Activated CD4-positive, alpha-beta memory T cell treated with anti-CD3 and anti-CD28 coated beads for 36 hours (primary cell): ENCODE measurements at regions of chr1 and their contacts with region 1.

Region 1: DNA sequence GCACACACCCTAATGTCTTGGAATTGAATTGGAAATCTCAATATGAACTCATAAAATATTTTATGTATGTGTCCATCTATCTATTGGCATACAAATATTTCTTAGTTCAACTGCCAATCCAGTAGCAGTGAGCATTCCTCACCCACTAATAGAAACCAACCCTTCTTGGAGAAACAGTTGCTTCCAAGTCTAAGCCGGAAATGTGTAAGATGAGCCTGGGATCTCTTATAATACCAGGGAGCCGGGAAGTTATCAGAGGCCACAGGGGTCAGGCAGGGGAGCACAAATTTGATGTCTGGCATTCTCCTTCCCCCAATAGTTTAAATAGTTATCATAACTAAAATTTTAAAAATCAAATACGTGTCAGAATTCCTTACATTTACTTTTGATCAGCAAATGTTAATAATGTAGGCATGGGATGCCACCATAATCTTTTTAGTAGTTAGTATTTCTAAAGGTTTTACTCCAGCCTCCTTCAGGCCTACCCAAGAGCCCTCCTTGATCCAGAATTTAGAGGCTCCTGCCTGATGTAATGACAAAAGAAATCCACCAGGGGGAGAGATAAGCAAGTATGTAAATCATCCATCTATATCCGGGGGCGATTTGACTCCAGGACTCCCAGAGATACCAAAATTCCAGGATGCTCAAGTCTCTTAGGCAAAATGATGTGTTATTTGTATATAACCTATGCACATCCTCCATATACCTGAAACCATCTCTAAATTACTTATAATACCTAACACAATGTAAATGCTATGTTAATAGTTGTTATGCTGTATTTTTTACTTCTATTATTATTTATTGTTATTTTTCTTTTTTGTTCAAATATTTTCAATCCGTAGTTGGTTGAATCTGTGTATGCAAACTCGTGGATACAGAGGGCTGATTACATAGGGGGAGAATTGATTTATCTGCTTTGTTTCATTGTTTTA is 218.7 kb upstream of the COA6 start:
- DNase-seq: no peak
- H3K4me3 Mint-ChIP-seq: no peak overlapping the region
- H3K27ac Mint-ChIP-seq: no peak overlapping the region
- H3K4me1 Mint-ChIP-seq: peaks cover 7% of the 10 kb centered on the region
- H3K27me3 Mint-ChIP-seq: peaks cover 11% of the 10 kb centered on the region

Region 2: DNA sequence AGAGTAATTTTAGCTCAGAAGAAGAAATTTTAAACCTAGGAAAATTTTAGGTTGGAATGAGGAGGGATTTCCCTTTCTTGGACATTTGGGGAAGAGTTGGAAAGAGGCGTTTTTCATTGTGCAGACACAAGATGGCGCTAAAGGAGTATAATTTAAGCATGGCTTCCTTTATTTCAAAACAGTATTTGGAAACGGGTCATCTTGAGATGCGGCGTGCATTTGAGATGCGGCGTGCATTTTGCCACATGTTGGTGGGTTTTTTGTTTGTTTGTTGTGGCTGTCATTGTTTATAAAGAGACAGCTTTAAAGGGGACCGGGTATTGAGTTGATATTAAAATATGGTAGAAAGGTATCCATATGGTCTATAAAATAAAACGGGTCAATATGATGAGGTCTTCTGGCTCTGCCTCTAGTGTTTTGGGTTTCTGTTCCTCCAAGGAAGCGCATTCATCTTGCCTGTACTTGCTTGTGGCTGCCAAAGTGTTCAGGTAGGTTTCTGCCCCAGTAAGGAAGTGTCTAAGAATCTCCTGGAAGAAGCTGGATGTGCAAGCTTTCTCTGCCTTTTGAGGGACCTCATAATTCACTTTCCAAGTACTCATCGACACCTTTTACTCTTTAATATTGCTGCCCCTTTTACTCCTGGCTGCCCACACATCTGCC is 39.8 kb before region 1 on chr1:
- CTCF ChIA-PET with region 1: no interaction called
- POLR2A ChIA-PET with region 1: no interaction called
- intact Hi-C with region 1: loop called (anchors 2 kb)
- DNase-seq: peak; percentile 38
- H3K4me3 Mint-ChIP-seq: peak overlapping the region; percentile 25
- H3K27ac Mint-ChIP-seq: no peak overlapping the region
- H3K4me1 Mint-ChIP-seq: peaks cover 7% of the 10 kb centered on the region
- H3K27me3 Mint-ChIP-seq: peaks cover 15% of the 10 kb centered on the region

Region 3: DNA sequence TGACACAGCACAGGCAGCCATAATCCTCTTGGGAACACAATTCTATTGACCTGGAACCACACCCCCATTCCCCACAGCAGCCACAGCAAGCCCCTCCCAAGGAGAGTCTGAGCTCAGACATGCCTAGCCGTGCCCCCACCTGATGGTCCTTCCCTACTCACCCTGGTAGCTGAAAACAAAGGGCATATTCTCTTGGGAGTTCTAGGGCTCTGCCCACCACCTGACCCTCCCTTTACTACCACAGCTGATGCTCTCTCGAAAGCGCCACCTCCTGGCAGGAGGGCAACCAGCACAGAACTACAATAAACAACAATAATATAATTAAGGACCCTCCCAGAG is 33.8 kb after region 1 on chr1:
- CTCF ChIA-PET with region 1: no interaction called
- POLR2A ChIA-PET with region 1: no interaction called
- intact Hi-C with region 1: loop called (anchors 2 kb)
- DNase-seq: peak; percentile 34
- H3K4me3 Mint-ChIP-seq: no peak overlapping the region
- H3K27ac Mint-ChIP-seq: no peak overlapping the region
- H3K4me1 Mint-ChIP-seq: peaks cover 6% of the 10 kb centered on the region
- H3K27me3 Mint-ChIP-seq: peaks cover 56% of the 10 kb centered on the region

Region 4: GRCh38 chr1:234398849-234399381 is 244.3 kb after region 1 on chr1:
- CTCF ChIA-PET with region 1: no interaction called
- POLR2A ChIA-PET with region 1: no interaction called
- intact Hi-C with region 1: loop called (anchors 10 kb)
- DNase-seq: no peak
- H3K4me3 Mint-ChIP-seq: peak overlapping the region; percentile 66
- H3K27ac Mint-ChIP-seq: peak overlapping the region; percentile 92
- H3K4me1 Mint-ChIP-seq: peaks cover 53% of the 10 kb centered on the region
- H3K27me3 Mint-ChIP-seq: no peaks in the 10 kb centered on the region